Endothelial cell of umbilical vein (primary cell): ENCODE measurements at regions of chr17 and their contacts with region 1.

Region 1: GRCh38 chr17:10683853-10684252 is 13.5 kb downstream of the SCO1 start:
- DNase-seq: peak; percentile 25
- H3K4me3 ChIP-seq: no peak overlapping the region
- H3K27ac ChIP-seq: no peak overlapping the region
- H3K4me1 ChIP-seq: no peaks in the 10 kb centered on the region
- H3K27me3 ChIP-seq: no peaks in the 10 kb centered on the region
- CTCF ChIP-seq: peak; percentile 31 to 42
- POLR2A ChIP-seq: no peak

Region 2: DNA sequence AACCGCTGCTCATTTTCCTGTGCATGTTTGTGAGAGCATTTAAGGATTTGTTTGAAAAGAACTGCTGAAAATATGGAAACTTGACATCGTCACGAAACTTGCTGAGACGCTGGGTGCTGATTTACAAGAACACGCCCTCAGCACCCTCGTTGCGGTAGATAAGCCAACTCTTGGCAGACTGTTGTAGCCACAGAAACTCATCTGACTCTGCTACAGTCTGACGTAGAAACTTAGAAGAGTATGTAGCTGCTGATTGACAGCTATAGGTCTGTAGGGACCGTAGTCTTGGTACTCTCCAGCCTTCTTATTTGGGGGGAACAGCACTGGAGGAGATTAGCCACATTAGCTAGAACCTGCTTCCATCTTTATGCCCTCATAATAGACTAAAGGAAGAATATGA is 98.3 kb before region 1 on chr17:
- CTCF ChIA-PET with region 1: no interaction called
- POLR2A ChIA-PET with region 1: no interaction called
- dilution Hi-C with region 1: no loop called
- intact Hi-C with region 1: no loop called
- DNase-seq: no peak
- H3K4me3 ChIP-seq: no peak overlapping the region
- H3K27ac ChIP-seq: no peak overlapping the region
- H3K4me1 ChIP-seq: no peaks in the 10 kb centered on the region
- H3K27me3 ChIP-seq: no peaks in the 10 kb centered on the region
- CTCF ChIP-seq: no peak
- POLR2A ChIP-seq: no peak

Region 3: GRCh38 chr17:10600571-10600970 is 83.3 kb before region 1 on chr17:
- CTCF ChIA-PET with region 1: no interaction called
- POLR2A ChIA-PET with region 1: no interaction called
- dilution Hi-C with region 1: no loop called
- intact Hi-C with region 1: no loop called
- DNase-seq: peak; percentile 16
- H3K4me3 ChIP-seq: no peak overlapping the region
- H3K27ac ChIP-seq: no peak overlapping the region
- H3K4me1 ChIP-seq: no peaks in the 10 kb centered on the region
- H3K27me3 ChIP-seq: no peaks in the 10 kb centered on the region
- CTCF ChIP-seq: no peak
- POLR2A ChIP-seq: no peak

Region 4: DNA sequence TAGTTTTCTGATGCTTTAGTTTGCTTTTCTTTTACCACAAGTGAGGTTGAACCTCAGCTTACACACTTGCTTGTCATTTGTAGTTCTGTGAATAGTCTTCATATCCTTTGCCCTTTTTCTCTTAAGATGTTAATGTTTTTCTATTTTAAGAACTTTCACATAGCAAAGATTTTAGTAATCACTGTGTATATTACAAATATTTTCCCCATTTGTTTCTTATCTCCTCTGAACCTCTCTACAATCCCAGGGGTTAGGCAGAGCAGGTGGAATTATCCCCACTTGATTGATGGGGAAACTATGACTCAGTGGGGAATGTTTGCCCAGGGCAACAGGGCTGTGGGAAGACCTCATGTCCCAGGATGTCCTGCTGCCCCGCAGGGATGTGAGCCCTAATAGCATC is 15.1 kb before region 1 on chr17:
- CTCF ChIA-PET with region 1: interaction called, 16 read pairs
- POLR2A ChIA-PET with region 1: interaction called, 6 read pairs
- dilution Hi-C with region 1: no loop called
- intact Hi-C with region 1: no loop called
- DNase-seq: peak; percentile 32
- H3K4me3 ChIP-seq: no peak overlapping the region
- H3K27ac ChIP-seq: no peak overlapping the region
- H3K4me1 ChIP-seq: peaks cover 2% of the 10 kb centered on the region
- H3K27me3 ChIP-seq: no peaks in the 10 kb centered on the region
- CTCF ChIP-seq: no peak
- POLR2A ChIP-seq: no peak

Region 5: DNA sequence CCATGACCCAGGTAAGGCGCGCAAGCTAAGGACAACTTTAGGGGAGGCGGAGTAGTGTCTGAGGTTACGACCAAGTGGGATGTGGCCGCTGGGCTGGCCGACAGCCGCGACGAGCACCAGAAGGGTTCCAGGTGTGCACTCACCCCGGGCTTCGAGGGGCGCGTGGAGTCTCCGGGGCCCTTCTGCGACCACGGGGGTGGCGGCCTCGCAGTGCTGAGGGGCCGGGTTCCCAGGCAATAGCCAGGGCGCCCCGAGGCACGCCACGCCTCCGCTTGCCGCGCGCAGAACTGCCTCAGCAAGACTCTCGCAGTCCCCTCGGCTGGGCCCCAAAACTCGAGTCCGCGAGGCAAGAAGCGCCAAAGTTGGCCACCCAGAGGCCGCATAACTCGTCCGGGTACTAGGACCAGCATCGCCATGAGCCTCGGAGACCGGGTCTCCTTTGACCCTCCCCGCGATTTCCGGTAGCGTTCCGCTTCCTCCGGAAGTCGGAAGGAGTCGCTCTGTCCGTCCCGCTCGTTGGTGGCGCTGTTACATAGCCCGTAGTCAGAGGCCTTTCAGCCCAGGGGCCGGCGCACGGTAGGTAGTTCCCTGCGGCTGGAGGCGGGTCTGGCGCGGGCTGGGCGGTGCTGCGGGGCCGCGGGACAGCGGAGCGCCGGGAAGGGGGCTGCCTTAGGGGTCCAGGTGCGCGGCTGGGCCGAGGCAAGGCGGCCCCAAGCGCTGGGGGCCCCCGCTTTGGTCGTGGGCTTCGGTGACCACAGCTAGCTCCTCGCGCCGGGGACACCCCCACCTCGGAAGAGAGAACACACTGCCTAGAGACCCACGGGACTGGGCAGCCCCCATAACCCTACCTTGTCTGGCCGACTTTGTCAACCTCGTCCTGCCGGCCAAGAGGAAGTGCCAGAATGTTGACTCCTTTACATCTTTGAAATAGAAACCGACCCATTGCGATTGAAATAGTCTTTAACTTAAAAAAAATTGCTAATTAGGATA is 13.5 kb after region 1 on chr17 and contains the starts of genes ADPRM and SCO1:
- CTCF ChIA-PET with region 1: interaction called, 10 read pairs
- POLR2A ChIA-PET with region 1: no interaction called
- dilution Hi-C with region 1: no loop called
- intact Hi-C with region 1: no loop called
- DNase-seq: peak; percentile 93
- H3K4me3 ChIP-seq: peak within 1 kb of the TSS; percentile 74 to 92 (median 85)
- H3K27ac ChIP-seq: peak within 1 kb of the TSS; percentile 94
- H3K4me1 ChIP-seq: peaks cover 20% of the 10 kb centered on the region
- H3K27me3 ChIP-seq: no peaks in the 10 kb centered on the region
- CTCF ChIP-seq: peak; percentile 20 to 59
- POLR2A ChIP-seq: peak; percentile 85
- total RNA-seq, gene ADPRM: 7.6 and 7.9 TPM in 2 replicates
- total RNA-seq, gene SCO1: 28.0 and 30.8 TPM in 2 replicates

Region 6: GRCh38 chr17:10812674-10813073 is 128.8 kb after region 1 on chr17:
- CTCF ChIA-PET with region 1: no interaction called
- POLR2A ChIA-PET with region 1: no interaction called
- dilution Hi-C with region 1: no loop called
- intact Hi-C with region 1: no loop called
- DNase-seq: no peak
- H3K4me3 ChIP-seq: no peak overlapping the region
- H3K27ac ChIP-seq: no peak overlapping the region
- H3K4me1 ChIP-seq: no peaks in the 10 kb centered on the region
- H3K27me3 ChIP-seq: no peaks in the 10 kb centered on the region
- CTCF ChIP-seq: no peak
- POLR2A ChIP-seq: no peak